Ovary (tissue), 10 donors: ENCODE measurements at regions of chr6 and their contacts with region 1.

Region 1: GRCh38 chr6:26571592-26572296 is 25.0 kb upstream of the ABT1 start:
- DNase-seq: peak in 4 of 5 donors; percentile 51 to 75 (median 52)
- H3K4me3 ChIP-seq: peak overlapping the region; percentile 37
- H3K27ac ChIP-seq: peak overlapping the region in 1 of 2 donors; percentile 43
- H3K4me1 ChIP-seq: no peaks in the 10 kb centered on the region
- H3K27me3 ChIP-seq: no peaks in the 10 kb centered on the region
- CTCF ChIP-seq: no peak
- EP300 ChIP-seq: no peak
- POLR2A ChIP-seq: no peak

Region 2: DNA sequence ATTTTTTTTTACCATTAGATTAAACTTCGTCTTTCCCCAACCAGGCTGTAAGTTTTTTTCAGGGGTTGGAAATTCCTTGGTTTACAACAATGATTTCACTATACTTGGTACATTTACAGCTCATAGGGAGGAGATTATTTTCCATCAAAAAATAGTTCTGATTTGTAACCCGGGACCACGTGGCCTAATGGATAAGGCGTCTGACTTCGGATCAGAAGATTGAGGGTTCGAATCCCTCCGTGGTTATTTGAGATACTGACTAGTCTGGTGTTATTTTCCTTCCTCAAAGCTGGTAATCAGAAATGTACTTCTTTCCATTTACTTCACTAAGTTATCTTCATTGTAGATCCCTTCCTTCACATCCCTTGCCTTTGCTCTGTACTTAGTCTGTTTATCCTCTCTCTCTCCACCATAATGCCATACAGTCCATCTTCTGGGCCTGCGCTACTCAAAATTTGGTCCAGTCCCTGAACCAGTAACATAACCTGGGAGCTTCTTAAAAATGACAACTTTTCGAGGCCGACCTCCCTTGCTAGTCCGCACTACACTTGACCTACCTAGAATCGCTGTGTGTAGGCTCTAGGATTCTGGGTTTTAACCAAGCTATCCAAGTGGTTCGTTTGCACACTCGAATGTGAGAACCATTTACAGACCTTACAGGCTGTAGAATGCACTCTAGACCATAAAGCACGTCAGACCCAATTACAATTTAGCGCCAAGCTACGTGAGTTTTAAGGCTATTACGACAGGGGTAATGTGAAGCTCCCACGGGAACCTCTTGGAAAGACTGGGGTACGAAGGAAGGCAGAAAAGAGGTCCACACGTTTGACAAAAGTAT is 248.9 kb before region 1 on chr6:
- intact Hi-C with region 1: no loop called
- DNase-seq: peak in 4 of 5 donors; percentile 35 to 49 (median 47)
- H3K4me3 ChIP-seq: peak overlapping the region; percentile 45
- H3K27ac ChIP-seq: no peak overlapping the region
- H3K4me1 ChIP-seq: peaks cover 2% of the 10 kb centered on the region
- H3K27me3 ChIP-seq: no peaks in the 10 kb centered on the region
- CTCF ChIP-seq: no peak
- EP300 ChIP-seq: no peak
- POLR2A ChIP-seq: no peak

Region 3: GRCh38 chr6:26342106-26343004 is 229.4 kb before region 1 on chr6:
- intact Hi-C with region 1: loop called in 2 of 4 experiments (anchors 5 kb)
- DNase-seq: no peak
- H3K4me3 ChIP-seq: peak overlapping the region; percentile 18
- H3K27ac ChIP-seq: no peak overlapping the region
- H3K4me1 ChIP-seq: no peaks in the 10 kb centered on the region
- H3K27me3 ChIP-seq: no peaks in the 10 kb centered on the region
- CTCF ChIP-seq: no peak
- EP300 ChIP-seq: no peak
- POLR2A ChIP-seq: no peak